ENCODE measurements at regions of chr4 and their contacts with region 1.

Region 1: DNA sequence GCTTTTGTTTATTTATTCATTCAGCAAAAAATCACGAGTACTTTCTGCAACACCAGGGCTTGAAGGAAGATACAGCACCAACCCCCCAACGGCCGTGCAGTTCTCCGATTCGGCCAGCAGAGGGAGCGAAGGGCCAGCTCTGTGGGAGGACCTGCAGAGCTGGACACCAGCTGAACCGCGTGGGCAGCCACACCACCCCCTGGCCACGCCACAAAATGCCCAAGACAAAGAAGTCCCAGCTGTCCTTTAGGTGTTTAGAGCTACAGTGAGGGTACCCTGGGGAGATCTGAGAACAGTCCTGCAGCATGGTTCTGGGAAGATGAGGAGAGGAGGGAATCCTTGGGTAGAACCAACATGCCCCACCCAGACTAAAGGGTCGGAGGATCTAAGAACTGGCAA is 83.1 kb downstream of the RELL1 start:
- DNase-seq: peak; percentile 91
- ATAC-seq: peak; percentile 96

Region 2: DNA sequence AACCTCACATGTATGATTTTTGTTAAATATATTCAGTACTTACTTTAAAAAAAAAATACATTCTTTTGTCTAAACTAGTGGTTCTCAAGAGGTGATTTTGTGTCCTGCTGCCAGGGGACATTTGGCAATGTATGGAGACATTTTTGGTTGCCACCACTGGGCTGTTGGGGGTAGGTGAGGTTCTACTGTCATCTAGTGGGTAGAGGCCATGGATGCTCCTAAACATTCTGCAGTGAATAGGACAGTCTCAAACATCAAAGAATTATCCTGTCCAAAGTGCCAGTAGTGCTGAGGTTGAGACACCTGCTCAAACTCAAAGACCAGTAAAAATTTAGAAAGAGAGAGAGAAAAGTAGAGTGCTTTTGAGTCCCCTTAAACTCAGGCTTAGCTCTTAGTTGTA is 190.5 kb after region 1 on chr4:
- intact Hi-C with region 1: loop called (anchors 2 kb)
- DNase-seq: no peak
- ATAC-seq: peak; percentile 82

Measured in Right ventricle myocardium inferior (tissue), 1 donor.